ENCODE measurements at regions of chr11 and their contacts with region 1.

Region 1: DNA sequence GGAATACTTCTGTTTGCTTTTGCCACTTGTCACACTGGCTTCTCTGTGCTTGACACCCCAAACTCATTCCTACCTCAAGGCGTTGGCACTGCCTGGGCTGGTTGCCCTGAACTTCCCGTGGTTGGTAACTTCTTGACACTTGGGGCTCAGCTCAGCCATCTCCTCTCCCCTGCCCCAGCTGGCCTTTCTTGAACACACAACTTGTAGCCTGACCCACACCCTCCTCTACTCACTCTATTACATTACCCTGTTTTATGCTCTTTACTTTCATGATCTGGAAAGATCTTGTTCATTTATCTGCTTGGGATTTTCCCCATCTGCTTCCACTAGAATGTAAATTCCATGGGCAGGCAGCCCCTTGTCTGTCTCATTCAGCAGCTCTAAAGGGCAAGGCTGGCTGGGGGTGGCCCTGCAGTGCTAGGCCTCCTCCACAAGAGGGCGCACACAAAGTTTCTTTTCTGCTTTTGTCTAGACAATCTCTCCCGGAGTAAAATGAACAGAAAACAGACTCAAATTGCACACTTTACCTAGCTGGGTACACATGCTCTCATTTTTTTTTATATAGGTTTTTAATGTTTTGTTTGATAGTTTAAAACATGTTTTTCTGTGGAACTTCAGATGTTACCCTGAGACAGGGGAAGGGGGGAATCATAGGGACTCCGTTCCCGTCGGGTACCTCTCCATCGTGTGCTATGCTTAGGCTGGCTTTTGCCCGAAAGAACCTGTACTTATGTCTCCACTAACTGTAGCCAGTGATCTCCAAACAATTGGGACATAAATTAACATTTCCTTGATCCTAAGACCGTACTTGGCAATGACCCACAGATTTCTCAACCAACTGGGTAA is 16.4 kb upstream of the MRGPRX2 start:
- DNase-seq: peak; percentile 78
- ATAC-seq: peak; percentile 84
- H3K4me3 Mint-ChIP-seq: no peak overlapping the region
- H3K27ac Mint-ChIP-seq: no peak overlapping the region
- H3K4me1 Mint-ChIP-seq: no peaks in the 10 kb centered on the region
- H3K27me3 Mint-ChIP-seq: peaks cover 10% of the 10 kb centered on the region

Region 2: DNA sequence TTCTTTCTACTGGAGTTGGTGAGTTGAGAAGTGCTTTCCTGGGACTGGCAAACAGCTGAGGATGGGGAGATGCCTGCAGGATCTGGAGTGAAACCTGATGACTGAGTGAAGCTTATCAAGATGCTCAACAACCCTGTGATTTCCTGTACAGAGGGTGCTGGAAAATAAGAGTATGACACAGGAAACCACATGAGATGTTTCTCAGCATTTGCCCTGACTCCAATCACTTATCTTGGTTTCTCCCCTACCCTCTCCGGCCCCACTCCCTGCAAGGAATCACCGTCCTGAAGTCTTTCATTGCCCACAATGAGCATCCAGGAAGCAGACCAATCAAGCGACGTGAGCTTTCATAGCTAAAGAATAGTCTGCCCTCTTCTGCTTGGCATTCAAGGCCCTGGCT is 16.3 kb before region 1 on chr11 and contains the start of gene MRGPRX2:
- CTCF ChIA-PET with region 1: interaction called, 30 read pairs
- POLR2A ChIA-PET with region 1: no interaction called
- intact Hi-C with region 1: no loop called
- DNase-seq: peak; percentile 52
- ATAC-seq: peak; percentile 91
- H3K4me3 Mint-ChIP-seq: no peak within 1 kb of the TSS
- H3K27ac Mint-ChIP-seq: peak within 1 kb of the TSS; percentile 20
- H3K4me1 Mint-ChIP-seq: peaks cover 19% of the 10 kb centered on the region
- H3K27me3 Mint-ChIP-seq: peaks cover 15% of the 10 kb centered on the region
- total RNA-seq, gene MRGPRX2: not detected

Region 3: DNA sequence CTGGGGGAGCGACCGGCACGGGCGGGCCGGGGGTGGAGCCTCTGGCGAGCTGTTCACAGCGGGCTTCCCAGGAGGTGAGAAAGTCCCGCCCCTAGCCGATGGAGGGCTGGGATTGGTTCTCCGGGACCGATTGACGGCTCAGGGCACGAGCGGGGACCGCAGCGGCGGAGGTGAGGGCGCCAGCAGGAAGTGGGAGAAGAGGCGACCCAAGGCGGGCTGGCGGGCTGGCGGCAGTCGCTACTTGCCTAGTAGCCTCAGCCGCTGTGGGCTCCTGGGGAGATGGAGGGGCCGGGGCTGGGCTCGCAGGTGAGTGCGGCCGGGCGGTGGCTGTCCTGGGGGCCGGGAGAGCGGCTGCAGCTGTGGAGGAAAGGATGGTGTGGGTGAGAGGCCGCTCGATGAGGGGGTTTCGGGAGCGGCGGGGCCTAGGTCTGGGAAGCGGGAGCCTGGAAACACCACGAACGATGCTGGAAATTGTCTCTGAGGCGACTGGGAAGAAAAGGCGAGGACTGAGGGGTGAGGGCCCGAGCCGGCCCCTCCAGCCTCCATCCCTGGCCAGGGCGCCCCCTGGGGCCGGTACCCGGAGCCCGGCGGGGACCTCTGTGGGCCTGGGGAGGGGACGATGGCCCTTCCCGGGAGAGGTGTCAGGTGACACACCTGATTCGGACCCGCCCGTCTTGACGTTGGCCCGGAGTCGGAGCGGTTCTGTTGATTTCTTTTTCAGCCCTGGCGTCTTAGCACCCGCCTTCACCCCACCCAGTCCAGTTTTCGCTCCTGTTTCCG is 40.2 kb after region 1 on chr11 and contains the start of gene ZDHHC13:
- CTCF ChIA-PET with region 1: interaction called, 16 read pairs
- POLR2A ChIA-PET with region 1: interaction called, 4 read pairs
- intact Hi-C with region 1: loop called (anchors 2 to 5 kb)
- DNase-seq: peak; percentile 97
- ATAC-seq: peak; percentile 99
- H3K4me3 Mint-ChIP-seq: peak within 1 kb of the TSS; percentile 89
- H3K27ac Mint-ChIP-seq: peak within 1 kb of the TSS; percentile 87
- H3K4me1 Mint-ChIP-seq: peaks cover 51% of the 10 kb centered on the region
- H3K27me3 Mint-ChIP-seq: no peaks in the 10 kb centered on the region
- total RNA-seq, gene ZDHHC13: 22.9 to 25.9 TPM

Region 4: DNA sequence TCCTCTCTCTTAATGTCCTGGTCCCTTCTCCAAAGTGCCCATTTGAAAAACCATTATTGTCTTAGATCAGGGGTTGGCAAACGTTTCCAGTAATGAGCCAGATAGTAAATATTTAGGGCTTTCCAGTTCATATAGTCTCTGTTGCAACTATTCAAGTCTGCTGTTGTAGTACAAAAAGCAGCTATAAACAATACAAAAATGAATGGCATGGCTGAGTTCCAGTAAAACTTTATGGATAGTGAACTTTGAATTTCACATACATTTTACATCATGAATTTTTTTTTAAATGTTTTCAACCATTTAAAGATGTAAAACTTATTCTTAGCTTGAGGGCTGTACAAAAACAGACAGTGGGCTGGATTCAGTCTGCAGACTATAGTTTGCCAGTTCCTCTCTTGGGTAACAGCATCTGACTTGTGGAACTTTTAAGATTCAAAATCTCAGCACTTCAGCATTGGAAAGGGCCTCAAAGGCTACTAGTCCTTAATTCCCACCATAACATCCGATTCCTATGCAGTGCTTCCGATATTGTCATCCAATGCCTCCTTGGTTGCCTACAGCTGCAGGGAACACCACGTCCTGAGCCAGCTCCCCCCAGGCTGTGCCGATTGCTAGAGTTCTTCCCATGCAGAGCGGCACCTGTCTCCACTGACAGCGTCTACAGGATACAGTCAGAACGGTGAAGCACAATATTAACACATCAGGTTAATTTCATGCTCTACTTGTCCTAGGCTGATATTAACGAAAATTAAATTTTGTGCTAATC is 229.4 kb after region 1 on chr11:
- CTCF ChIA-PET with region 1: interaction called, 3 read pairs
- POLR2A ChIA-PET with region 1: no interaction called
- intact Hi-C with region 1: loop called in 1 of 2 experiments (anchors 5 kb)
- DNase-seq: no peak
- ATAC-seq: no peak
- H3K4me3 Mint-ChIP-seq: no peak overlapping the region
- H3K27ac Mint-ChIP-seq: no peak overlapping the region
- H3K4me1 Mint-ChIP-seq: no peaks in the 10 kb centered on the region
- H3K27me3 Mint-ChIP-seq: peaks cover 10% of the 10 kb centered on the region